CD4-positive, alpha-beta memory T cell (primary cell): ENCODE measurements at regions of chr1 and their contacts with region 1.

Region 1: DNA sequence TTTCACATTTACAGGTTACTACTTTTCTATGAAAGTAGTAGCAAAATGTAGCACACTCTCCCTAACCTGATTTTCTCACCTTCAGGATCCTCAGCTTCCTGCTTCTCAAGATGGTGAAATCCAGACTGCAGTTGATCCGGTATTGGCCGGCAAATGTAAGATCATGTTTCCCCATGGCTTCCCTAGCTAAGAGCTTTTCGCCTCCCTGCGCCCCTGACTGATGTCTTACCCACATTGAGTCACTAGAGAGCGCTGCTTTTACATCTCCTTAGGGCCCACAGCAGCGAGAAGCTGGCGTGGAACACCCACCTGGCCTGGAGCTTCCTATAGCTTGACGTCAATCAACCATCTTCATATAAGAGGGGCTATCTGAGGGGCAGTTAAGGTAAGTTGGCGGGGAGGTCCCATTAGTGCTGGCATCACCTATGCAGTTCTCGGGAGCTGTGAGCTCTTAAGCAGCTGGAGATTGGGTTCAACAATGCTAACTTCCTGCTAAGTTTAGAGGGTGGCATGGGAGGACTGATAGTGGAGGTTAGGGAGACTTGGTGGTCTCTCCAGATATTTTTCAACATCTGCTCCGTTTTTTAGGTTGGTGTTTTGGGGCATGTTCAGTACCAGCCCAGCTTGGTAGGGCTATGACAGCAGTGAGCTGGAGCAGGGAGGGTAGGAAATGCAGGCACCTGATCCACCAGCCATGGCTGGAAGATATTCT is 5.5 kb downstream of the PTPN7 start:
- DNase-seq: peak; percentile 58 to 70 (median 64)
- H3K4me3 ChIP-seq: no peak overlapping the region
- H3K4me3 Mint-ChIP-seq: peak overlapping the region in 4 of 8 donors; percentile 26 to 61 (median 39)
- H3K27ac ChIP-seq: peak overlapping the region; percentile 56
- H3K27ac Mint-ChIP-seq: peak overlapping the region; percentile 72 to 95 (median 90)
- H3K4me1 ChIP-seq: peaks cover 55% of the 10 kb centered on the region
- H3K4me1 Mint-ChIP-seq: peaks cover 32 to 60% (median 48%) of the 10 kb centered on the region in 4 donors
- H3K27me3 ChIP-seq: no peaks in the 10 kb centered on the region
- H3K27me3 Mint-ChIP-seq: no peaks in the 10 kb centered on the region

Region 2: DNA sequence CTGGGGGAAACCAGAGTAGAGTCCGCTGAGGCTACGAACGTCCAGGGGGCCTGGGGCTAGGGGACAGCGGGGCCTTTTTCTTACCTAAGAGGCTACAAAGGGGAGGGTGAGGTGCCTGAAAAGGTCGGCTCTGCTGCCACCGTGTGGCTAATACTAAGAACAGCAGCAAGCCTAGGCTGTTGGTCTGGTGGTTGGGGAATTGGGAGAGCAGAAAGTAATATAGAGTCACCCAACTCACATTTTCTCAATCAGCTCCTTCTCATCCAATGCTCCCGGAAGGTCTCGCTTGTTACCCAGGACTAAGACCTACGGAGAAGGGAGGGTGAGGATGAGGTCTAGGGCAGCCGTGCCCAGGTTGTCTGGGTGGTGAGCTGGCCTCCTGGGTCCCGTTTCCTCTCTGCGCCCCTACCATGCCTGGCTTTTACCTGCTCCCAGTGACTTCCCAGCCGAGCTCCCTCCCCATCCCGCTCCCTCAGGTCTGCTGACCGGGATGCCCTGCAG is 19.7 kb before region 1 on chr1:
- CTCF ChIA-PET with region 1: interaction called, 23 read pairs
- POLR2A ChIA-PET with region 1: no interaction called
- intact Hi-C with region 1: no loop called
- DNase-seq: peak; percentile 47 to 59 (median 58)
- H3K4me3 ChIP-seq: no peak overlapping the region
- H3K4me3 Mint-ChIP-seq: no peak overlapping the region
- H3K27ac ChIP-seq: no peak overlapping the region
- H3K27ac Mint-ChIP-seq: peak overlapping the region in 2 of 7 donors; percentile 14 to 70
- H3K4me1 ChIP-seq: peaks cover 7% of the 10 kb centered on the region
- H3K4me1 Mint-ChIP-seq: peaks cover 2 to 20% (median 4%) of the 10 kb centered on the region in 4 donors
- H3K27me3 ChIP-seq: no peaks in the 10 kb centered on the region
- H3K27me3 Mint-ChIP-seq: no peaks in the 10 kb centered on the region

Region 3: DNA sequence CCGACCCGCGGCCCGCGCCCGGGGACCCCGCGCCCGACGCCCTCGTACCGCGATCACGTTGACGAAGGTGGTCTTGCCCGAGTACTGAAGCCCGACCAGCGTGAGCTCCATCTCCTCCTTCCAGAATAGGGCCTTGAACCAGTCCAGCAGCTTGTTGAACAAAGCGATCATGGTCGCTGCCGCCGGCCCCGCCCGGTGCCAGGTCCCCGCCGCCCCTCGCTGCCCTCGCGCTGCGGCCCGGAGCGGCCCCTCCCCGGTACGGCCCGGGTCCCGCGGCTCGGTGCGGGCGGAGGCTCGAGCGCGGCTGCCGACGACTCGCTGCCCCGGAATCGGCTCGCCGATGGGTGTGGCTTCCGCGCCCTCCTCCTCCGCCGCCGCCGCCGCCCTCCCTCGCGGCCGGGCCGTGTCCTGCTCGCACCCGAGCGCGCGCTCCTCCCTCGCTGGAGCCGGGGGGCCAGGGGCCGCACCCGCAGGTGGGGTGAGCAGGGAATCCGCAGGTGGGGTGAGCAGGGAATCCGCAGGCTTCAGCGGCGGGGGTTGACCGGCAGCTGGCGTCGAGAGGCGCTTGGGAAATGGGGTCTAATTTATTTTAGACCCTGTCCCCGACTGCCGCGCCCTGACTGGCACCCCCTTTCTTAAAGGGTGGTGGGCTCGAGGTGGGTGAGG is 10.4 kb before region 1 on chr1 and contains the start of gene ARL8A:
- CTCF ChIA-PET with region 1: interaction called, 12 read pairs
- POLR2A ChIA-PET with region 1: interaction called, 164 read pairs
- intact Hi-C with region 1: loop called (anchors 1 kb)
- DNase-seq: peak; percentile 61 to 71 (median 66)
- H3K4me3 ChIP-seq: peak within 1 kb of the TSS; percentile 62 to 94
- H3K4me3 Mint-ChIP-seq: peak within 1 kb of the TSS; percentile 92 to 98 (median 96)
- H3K27ac ChIP-seq: peak within 1 kb of the TSS; percentile 80
- H3K27ac Mint-ChIP-seq: peak within 1 kb of the TSS; percentile 86 to 97 (median 96)
- H3K4me1 ChIP-seq: peaks cover 41% of the 10 kb centered on the region
- H3K4me1 Mint-ChIP-seq: peaks cover 23 to 53% (median 35%) of the 10 kb centered on the region in 4 donors
- H3K27me3 ChIP-seq: no peaks in the 10 kb centered on the region
- H3K27me3 Mint-ChIP-seq: no peaks in the 10 kb centered on the region
- total RNA-seq, gene ARL8A: 48.1 to 55.0 TPM

Region 4: DNA sequence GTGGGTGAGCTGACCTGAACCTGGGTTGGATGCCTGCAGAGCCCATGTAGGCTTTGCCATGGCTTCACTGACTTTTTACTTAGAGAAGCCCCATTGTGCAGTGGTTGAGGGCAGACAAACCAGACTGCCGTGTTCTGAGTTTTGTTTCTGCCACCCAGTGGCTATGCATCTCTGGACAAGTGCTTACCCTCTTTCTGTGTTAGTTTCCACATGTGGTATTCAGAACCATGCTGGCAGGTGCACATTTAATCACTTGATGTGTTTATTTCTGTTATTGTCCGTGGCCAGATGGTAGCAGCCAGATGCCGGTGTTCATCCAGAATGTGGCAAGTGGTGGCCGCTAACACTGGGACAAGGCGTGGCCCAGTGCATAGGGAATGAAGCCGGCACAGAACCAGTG is 15.8 kb after region 1 on chr1:
- CTCF ChIA-PET with region 1: interaction called, 15 read pairs
- POLR2A ChIA-PET with region 1: interaction called, 7 read pairs
- intact Hi-C with region 1: no loop called
- DNase-seq: no peak
- H3K4me3 ChIP-seq: no peak overlapping the region
- H3K4me3 Mint-ChIP-seq: no peak overlapping the region
- H3K27ac ChIP-seq: no peak overlapping the region
- H3K27ac Mint-ChIP-seq: peak overlapping the region in 1 of 7 donors; percentile 24
- H3K4me1 ChIP-seq: peaks cover 17% of the 10 kb centered on the region
- H3K4me1 Mint-ChIP-seq: peaks cover 3 to 26% (median 16%) of the 10 kb centered on the region in 4 donors
- H3K27me3 ChIP-seq: no peaks in the 10 kb centered on the region
- H3K27me3 Mint-ChIP-seq: no peaks in the 10 kb centered on the region

Region 5: DNA sequence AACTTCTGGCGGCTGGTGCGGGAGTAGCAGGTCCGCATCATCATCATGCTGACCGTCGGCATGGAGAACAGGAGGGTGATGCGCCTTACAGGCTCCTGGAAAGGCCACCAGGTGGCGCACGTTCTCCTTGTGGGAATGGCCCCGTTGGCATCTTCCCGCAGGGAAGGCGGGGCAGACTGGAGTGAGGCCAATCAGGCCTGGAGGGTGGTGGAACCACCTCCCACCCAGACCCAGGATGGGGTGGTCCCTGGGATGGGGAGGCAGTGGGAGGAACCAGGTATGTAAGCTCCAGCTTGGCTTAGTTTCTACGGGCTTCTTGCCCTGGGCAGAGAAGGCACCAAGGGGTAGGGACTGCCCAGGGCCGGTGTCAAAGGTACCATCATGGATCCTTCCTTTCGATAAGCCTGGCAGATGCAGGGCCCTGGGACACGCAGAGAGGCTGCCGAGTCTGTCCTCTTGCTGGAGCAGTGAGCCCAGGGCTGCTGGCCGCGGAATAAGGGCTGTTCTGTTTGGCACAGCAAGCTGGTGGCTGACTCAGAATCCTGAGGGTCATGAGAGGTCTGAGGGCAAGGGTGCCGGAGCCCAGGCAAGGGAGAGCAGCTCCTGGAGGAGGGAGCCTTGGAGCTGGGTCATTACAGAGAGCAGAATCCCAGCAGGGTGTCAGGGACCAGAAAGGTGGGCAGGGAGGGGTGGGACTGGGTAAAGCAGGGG is 30.0 kb after region 1 on chr1:
- CTCF ChIA-PET with region 1: interaction called, 41 read pairs
- POLR2A ChIA-PET with region 1: interaction called, 3 read pairs
- intact Hi-C with region 1: loop called (anchors 2 kb)
- DNase-seq: peak; percentile 43 to 56 (median 50)
- H3K4me3 ChIP-seq: no peak overlapping the region
- H3K4me3 Mint-ChIP-seq: no peak overlapping the region
- H3K27ac ChIP-seq: no peak overlapping the region
- H3K27ac Mint-ChIP-seq: peak overlapping the region in 1 of 7 donors; percentile 29
- H3K4me1 ChIP-seq: peaks cover 5% of the 10 kb centered on the region
- H3K4me1 Mint-ChIP-seq: peaks cover 9 to 16% (median 13%) of the 10 kb centered on the region in 4 donors
- H3K27me3 ChIP-seq: no peaks in the 10 kb centered on the region
- H3K27me3 Mint-ChIP-seq: peaks cover 4 to 6% of the 10 kb centered on the region in 2 donors

Region 6: DNA sequence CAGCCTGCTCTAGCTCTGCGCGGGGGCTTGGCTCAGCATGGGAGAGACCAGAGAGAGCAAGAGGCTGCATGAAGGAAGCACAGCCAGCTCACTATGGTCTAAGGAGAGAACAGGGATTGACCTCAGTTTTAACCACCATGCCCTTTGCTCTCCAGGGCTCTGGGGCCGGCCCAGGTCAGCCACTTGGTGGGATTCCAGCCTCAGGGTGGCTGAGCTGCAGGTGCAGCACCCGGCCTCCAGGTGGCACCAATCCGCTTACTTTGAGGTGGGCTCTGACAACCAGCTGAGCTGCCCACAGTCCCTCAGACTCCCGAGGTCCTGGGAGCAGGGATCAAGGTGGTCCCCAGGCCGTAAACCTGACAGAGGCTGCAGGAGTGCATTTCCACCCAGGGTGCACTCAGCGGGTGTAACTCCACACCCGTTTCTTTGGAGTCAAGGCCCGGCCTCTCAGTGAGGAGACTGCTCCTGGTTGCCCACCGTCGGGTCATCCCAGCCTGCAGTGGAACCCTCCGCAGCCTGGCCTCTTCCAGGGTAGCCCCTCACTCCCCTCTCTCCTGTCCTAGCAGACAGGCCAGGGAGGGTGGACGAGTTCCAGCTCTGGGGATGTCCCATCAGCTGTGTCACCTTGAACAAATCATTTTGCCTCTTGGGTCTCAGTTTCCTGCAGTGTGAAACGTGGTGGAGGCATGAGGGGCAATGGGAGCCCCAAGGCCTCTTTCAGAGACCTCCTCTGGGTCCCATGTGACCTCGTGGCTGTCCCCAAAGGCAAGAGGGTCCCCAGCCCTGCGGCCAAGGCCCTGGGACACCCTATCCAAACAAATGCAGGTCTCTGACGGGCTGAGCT is 38.1 kb after region 1 on chr1:
- CTCF ChIA-PET with region 1: interaction called, 41 read pairs
- POLR2A ChIA-PET with region 1: interaction called, 4 read pairs
- intact Hi-C with region 1: no loop called
- DNase-seq: peak in 4 of 5 donors; percentile 35 to 51 (median 38)
- H3K4me3 ChIP-seq: no peak overlapping the region
- H3K4me3 Mint-ChIP-seq: no peak overlapping the region
- H3K27ac ChIP-seq: no peak overlapping the region
- H3K27ac Mint-ChIP-seq: no peak overlapping the region
- H3K4me1 ChIP-seq: peaks cover 6% of the 10 kb centered on the region
- H3K4me1 Mint-ChIP-seq: peaks cover 2 to 5% (median 3%) of the 10 kb centered on the region in 4 donors
- H3K27me3 ChIP-seq: peaks cover 14% of the 10 kb centered on the region
- H3K27me3 Mint-ChIP-seq: peaks cover 9 to 21% of the 10 kb centered on the region in 2 donors

Region 7: GRCh38 chr1:202203238-202204039 is 48.5 kb after region 1 on chr1:
- CTCF ChIA-PET with region 1: no interaction called
- POLR2A ChIA-PET with region 1: no interaction called
- intact Hi-C with region 1: no loop called
- DNase-seq: no peak
- H3K4me3 ChIP-seq: no peak overlapping the region
- H3K4me3 Mint-ChIP-seq: no peak overlapping the region
- H3K27ac ChIP-seq: no peak overlapping the region
- H3K27ac Mint-ChIP-seq: peak overlapping the region in 1 of 7 donors; percentile 1
- H3K4me1 ChIP-seq: peaks cover 30% of the 10 kb centered on the region
- H3K4me1 Mint-ChIP-seq: peaks cover 11 to 31% (median 13%) of the 10 kb centered on the region in 4 donors
- H3K27me3 ChIP-seq: no peaks in the 10 kb centered on the region
- H3K27me3 Mint-ChIP-seq: no peaks in the 10 kb centered on the region

Region 8: GRCh38 chr1:202315576-202316168 is 160.8 kb after region 1 on chr1:
- CTCF ChIA-PET with region 1: interaction called, 12 read pairs
- POLR2A ChIA-PET with region 1: no interaction called
- intact Hi-C with region 1: no loop called
- DNase-seq: peak; percentile 59 to 72 (median 68)
- H3K4me3 ChIP-seq: no peak overlapping the region
- H3K4me3 Mint-ChIP-seq: no peak overlapping the region
- H3K27ac ChIP-seq: no peak overlapping the region
- H3K27ac Mint-ChIP-seq: peak overlapping the region in 2 of 7 donors; percentile 25 to 26
- H3K4me1 ChIP-seq: no peaks in the 10 kb centered on the region
- H3K4me1 Mint-ChIP-seq: peaks cover 0 to 4% (median 0%) of the 10 kb centered on the region in 4 donors
- H3K27me3 ChIP-seq: no peaks in the 10 kb centered on the region
- H3K27me3 Mint-ChIP-seq: peaks cover 0 to 4% of the 10 kb centered on the region in 2 donors

Region 9: DNA sequence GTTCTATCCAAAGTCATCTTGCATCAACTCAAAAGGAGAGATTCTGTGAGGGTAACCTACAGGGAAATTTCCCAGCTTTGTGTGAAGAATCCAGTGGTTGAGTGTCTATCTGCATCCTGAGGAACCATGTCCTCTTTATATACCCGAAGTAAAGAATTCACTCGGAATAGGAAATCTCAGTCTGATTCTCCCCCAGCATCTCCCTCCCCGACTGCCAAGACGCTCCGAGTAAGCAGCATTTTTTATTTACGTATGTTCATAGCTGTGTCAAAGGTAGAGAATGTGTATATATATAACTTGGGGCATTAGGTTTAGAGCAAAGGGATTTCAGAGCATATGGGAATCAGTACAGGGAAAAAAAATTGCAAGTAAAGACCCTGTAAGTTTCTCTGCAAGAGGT is 385.1 kb after region 1 on chr1:
- CTCF ChIA-PET with region 1: no interaction called
- POLR2A ChIA-PET with region 1: no interaction called
- intact Hi-C with region 1: no loop called
- DNase-seq: no peak
- H3K4me3 ChIP-seq: no peak overlapping the region
- H3K4me3 Mint-ChIP-seq: no peak overlapping the region
- H3K27ac ChIP-seq: no peak overlapping the region
- H3K27ac Mint-ChIP-seq: no peak overlapping the region
- H3K4me1 ChIP-seq: no peaks in the 10 kb centered on the region
- H3K4me1 Mint-ChIP-seq: no peaks in the 10 kb centered on the region
- H3K27me3 ChIP-seq: no peaks in the 10 kb centered on the region
- H3K27me3 Mint-ChIP-seq: no peaks in the 10 kb centered on the region